ENCODE measurements at regions of chr10 and their contacts with region 1.

Region 1: GRCh38 chr10:103659674-103660363 is 166.3 kb downstream of the NEURL1 start:
- DNase-seq: peak; percentile 55 to 75
- ATAC-seq: peak; percentile 29 to 64
- H3K4me3 ChIP-seq: peak overlapping the region; percentile 56 to 69 (median 60)
- H3K27ac ChIP-seq: peak overlapping the region; percentile 89 to 94 (median 91)
- H3K4me1 ChIP-seq: peaks cover 38 to 40% of the 10 kb centered on the region in 2 donors
- H3K27me3 ChIP-seq: no peaks in the 10 kb centered on the region
- CTCF ChIP-seq: no peak
- POLR2A ChIP-seq: peak; percentile 26 to 28

Region 2: DNA sequence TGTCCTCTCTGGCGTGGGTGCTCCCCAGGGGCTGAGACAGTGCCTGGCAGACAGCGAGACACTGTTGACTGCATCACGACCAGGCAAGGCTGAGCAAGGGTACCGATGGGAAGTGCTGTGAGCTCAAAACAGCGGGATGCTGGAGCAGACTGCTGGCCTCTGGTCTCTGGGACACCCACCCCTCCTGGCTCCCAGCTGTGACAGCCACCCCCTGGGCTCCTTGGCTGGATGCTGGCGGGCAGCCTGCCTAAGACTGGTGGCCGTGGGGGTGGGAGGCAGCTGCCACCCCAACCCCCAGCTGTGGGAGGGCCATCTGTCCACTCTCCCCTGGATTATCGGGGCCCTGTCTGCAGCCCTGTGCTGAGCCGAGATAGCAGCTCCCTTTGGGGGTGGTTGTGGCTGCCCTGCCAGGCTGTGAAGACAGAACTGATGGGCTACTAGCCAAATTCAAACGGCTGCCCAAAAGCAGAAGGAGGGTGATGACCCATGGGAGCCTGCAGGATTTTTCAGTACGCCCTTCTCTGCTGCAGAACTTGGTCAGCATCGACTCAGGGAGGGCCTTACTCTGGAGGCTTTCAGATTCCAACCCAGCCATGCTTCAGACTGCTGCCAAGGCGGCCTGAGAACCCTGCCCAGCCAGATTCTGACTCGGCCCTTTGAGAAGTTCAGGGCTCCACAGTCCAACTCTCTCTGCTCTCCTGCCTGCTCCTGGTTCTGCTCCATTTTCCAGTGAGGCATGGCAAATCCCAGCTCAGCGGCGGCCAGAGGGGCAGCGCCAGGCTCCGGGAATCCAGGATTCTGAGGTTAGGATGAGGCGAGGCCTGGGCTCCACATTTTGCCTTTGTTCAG is 41.0 kb before region 1 on chr10:
- in situ Hi-C with region 1: no loop called
- intact Hi-C with region 1: loop called (anchors 2 kb)
- DNase-seq: peak; percentile 39 to 67
- ATAC-seq: peak; percentile 15 to 29
- H3K4me3 ChIP-seq: no peak overlapping the region
- H3K27ac ChIP-seq: peak overlapping the region in 2 of 4 donors; percentile 29 to 45
- H3K4me1 ChIP-seq: peaks cover 69 to 75% of the 10 kb centered on the region in 2 donors
- H3K27me3 ChIP-seq: no peaks in the 10 kb centered on the region
- CTCF ChIP-seq: no peak
- POLR2A ChIP-seq: no peak

Region 3: DNA sequence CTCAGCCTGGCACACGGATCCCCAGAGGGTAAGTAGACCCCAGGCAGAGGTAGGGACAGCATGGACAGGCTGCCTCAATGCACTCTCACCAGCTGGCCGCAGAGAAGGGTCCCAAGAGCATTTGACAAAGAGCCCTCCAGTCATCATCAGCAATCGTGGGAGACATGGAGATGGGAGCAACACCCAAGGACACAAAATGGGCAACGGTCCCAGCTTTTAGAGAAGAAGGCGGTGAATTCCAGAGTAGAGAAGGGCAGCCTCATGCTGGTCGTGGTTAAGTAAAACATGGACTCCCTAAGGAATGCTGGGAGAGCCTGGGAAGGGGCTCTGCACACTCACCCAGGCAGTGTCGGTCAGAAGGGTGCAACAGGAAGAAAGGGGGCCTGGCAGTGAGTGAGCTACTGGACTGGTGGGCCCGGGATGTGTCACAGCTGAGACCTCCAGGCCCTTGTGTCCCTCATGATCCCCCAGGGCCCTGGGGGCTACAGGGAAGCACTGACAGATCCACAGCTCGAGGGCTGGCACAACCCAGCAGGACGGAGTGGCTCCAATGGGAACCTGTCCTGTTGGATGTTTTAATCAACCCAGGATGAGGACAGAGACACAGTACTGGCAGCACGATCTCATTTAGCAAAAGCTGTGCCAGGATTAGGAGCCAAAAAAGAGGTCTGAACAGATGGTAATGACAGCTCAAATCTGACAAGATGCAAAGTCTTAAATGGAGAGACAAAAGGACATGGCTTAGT is 19.2 kb before region 1 on chr10:
- in situ Hi-C with region 1: no loop called
- intact Hi-C with region 1: no loop called
- DNase-seq: peak; percentile 53 to 70
- ATAC-seq: peak; percentile 83 to 84
- H3K4me3 ChIP-seq: no peak overlapping the region
- H3K27ac ChIP-seq: peak overlapping the region; percentile 46 to 66 (median 52)
- H3K4me1 ChIP-seq: peaks cover 58 to 64% of the 10 kb centered on the region in 2 donors
- H3K27me3 ChIP-seq: no peaks in the 10 kb centered on the region
- CTCF ChIP-seq: no peak
- POLR2A ChIP-seq: no peak